ENCODE measurements at regions of chr11 and their contacts with region 1.

Region 1: DNA sequence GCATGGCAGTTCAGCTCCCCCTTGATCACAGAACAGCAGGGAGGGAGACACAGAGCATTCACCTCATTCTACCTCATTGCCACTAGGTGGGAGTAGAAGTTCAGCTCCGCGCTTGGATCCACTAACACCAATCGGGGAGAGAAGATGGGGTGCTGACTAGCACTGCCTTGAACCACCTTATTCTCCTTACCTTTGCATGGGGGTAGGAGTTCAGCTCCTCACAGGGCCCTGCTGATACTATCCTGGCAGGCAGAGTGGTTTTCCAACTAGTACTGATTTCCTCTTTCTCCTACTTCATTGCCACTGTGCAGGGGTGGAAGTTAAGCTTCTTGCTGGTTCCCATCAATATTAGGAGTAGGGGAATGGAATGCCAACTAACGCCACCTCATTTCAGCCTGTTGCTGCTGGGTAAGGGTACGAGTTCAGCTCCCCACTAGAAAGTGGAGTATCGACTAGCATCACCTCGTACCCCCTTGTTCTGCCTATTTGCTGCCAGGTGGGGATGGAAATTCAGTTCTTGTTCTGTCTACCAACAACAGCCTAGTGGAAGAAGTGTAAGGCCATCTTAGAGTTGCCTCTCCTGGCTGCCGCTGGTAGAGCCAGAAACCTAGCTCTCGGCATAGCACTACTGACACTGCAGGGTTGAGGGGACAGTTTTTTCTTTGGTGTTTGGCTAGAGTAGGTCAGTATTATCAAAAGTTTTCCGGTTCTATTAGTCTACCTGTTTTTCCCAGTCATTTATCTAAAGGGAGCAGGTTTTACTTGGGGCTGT is 550.9 kb upstream of the CCDC90B start:
- DNase-seq: no peak
- H3K4me3 ChIP-seq: no peak overlapping the region
- H3K27ac ChIP-seq: no peak overlapping the region
- H3K4me1 ChIP-seq: peaks cover 0 to 37% (median 35%) of the 10 kb centered on the region in 4 donors
- H3K27me3 ChIP-seq: no peaks in the 10 kb centered on the region
- CTCF ChIP-seq: peak; percentile 60 to 78 (median 62)
- EP300 ChIP-seq: no peak
- POLR2A ChIP-seq: no peak

Region 2: GRCh38 chr11:83521647-83522596 is 315.1 kb before region 1 on chr11:
- intact Hi-C with region 1: no loop called
- DNase-seq: peak; percentile 29
- H3K4me3 ChIP-seq: no peak overlapping the region
- H3K27ac ChIP-seq: no peak overlapping the region
- H3K4me1 ChIP-seq: no peaks in the 10 kb centered on the region
- H3K27me3 ChIP-seq: no peaks in the 10 kb centered on the region
- CTCF ChIP-seq: no peak
- EP300 ChIP-seq: no peak
- POLR2A ChIP-seq: no peak

Region 3: GRCh38 chr11:84264066-84264465 is 427.0 kb after region 1 on chr11:
- intact Hi-C with region 1: no loop called
- DNase-seq: no peak
- H3K4me3 ChIP-seq: no peak overlapping the region
- H3K27ac ChIP-seq: no peak overlapping the region
- H3K4me1 ChIP-seq: no peaks in the 10 kb centered on the region
- H3K27me3 ChIP-seq: no peaks in the 10 kb centered on the region
- CTCF ChIP-seq: no peak
- EP300 ChIP-seq: no peak
- POLR2A ChIP-seq: no peak

Region 4: GRCh38 chr11:84524422-84525051 is 687.5 kb after region 1 on chr11:
- intact Hi-C with region 1: loop called (anchors 10 kb)
- DNase-seq: no peak
- H3K4me3 ChIP-seq: no peak overlapping the region
- H3K27ac ChIP-seq: peak overlapping the region in 2 of 4 donors; percentile 12 to 15
- H3K4me1 ChIP-seq: peaks cover 0 to 33% (median 20%) of the 10 kb centered on the region in 4 donors
- H3K27me3 ChIP-seq: no peaks in the 10 kb centered on the region
- CTCF ChIP-seq: peak; percentile 46 to 54 (median 49)
- EP300 ChIP-seq: peak; percentile 31
- POLR2A ChIP-seq: no peak

Region 5: DNA sequence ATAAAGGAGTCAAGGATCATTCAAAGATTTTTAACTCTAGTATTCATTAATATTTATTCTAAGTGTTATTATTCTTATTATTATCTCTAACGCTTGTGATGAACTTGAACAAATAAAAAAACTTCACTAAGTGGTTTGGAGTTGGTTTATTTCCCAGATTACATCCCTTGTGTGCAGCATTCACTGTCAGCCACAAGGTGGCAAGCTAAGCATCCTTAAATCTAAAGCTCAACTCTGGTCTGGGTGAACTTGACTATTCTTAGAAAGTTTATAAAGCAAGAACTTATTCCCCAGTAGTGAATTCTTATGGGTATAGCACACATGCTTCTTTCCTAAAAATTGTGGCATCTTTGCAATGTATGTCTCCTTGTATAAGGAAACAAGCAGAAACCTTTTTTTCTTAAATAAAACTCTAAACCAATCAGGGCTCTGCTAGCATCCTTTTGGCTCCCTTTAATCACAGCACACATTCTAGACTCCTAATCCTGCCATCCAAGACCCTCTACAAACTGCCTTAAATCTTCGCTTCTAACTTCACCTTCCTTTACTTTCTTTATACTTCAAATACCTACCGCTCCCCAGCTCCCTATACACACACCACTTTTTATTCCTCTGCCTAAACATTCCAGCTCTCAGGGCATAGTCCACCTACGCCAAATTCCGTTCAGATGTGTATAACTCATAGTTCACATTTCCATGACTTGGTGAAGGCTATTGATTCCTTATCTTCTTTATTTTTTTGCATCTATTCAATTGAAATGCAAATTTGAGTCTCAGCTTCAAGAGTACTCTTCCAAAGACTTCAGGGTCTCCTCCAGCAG is 721.2 kb after region 1 on chr11:
- intact Hi-C with region 1: loop called (anchors 5 kb)
- DNase-seq: no peak
- H3K4me3 ChIP-seq: no peak overlapping the region
- H3K27ac ChIP-seq: no peak overlapping the region
- H3K4me1 ChIP-seq: peaks cover 0 to 4% (median under 1%) of the 10 kb centered on the region in 4 donors
- H3K27me3 ChIP-seq: no peaks in the 10 kb centered on the region
- CTCF ChIP-seq: peak; percentile 78 to 81 (median 80)
- EP300 ChIP-seq: no peak
- POLR2A ChIP-seq: no peak